Activated naive CD4-positive, alpha-beta T cell treated with anti-CD3 and anti-CD28 coated beads for 36 hours (primary cell): ENCODE measurements at regions of chr6 and their contacts with region 1.

Region 1: GRCh38 chr6:108348655-108349349 is 53.9 kb downstream of the AFG1L start:
- DNase-seq: no peak
- H3K4me3 Mint-ChIP-seq: no peak overlapping the region
- H3K27ac Mint-ChIP-seq: peak overlapping the region; percentile 87
- H3K4me1 Mint-ChIP-seq: peaks cover 10% of the 10 kb centered on the region
- H3K27me3 Mint-ChIP-seq: no peaks in the 10 kb centered on the region

Region 2: DNA sequence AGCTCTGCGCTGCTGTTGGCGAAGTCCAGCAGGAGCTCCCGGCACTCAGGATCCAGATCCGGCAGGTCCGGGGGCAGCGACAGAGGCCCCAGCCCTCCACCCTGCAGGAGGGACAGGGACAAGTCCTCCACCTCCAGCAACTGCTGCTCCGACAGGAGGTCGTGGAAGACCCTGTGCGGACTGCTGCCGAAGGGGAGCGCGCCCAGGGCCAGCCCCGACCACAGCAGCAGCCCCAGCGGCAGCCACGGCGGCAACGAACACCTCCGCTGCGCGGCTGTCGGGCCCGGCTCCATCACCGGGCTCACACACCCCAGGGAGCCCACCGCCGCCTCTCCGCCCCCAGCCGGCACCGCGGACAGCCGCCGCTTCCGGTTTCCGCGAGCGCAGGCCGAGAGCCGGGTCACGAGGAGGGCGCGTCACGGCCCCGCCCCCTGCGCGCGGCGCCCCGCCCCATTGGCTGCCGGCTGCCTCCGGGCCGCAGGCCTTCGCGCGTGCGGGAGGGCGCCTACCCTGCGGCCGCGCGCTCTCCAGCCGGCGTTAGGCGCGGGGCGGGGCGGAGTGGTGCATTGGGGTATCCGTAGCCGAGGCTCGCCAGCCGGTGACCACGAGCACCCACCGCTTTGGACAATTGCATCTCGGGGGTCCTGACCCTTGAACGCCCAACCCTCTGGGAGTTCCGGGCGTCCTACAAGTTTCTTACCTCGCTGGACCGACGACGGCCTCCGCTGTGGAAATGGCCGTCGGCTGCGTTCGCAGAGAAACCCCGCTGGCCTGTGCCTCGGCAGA is 274.2 kb before region 1 on chr6 and contains the start of gene OSTM1:
- CTCF ChIA-PET with region 1: no interaction called
- intact Hi-C with region 1: loop called (anchors 1 kb)
- DNase-seq: peak; percentile 93
- H3K4me3 Mint-ChIP-seq: peak within 1 kb of the TSS; percentile 80
- H3K27ac Mint-ChIP-seq: peak within 1 kb of the TSS; percentile 78
- H3K4me1 Mint-ChIP-seq: peaks cover 30% of the 10 kb centered on the region
- H3K27me3 Mint-ChIP-seq: no peaks in the 10 kb centered on the region
- total RNA-seq, gene OSTM1: 7.1 to 7.5 TPM

Region 3: GRCh38 chr6:108227290-108227689 is 121.5 kb before region 1 on chr6:
- CTCF ChIA-PET with region 1: no interaction called
- intact Hi-C with region 1: no loop called
- DNase-seq: no peak
- H3K4me3 Mint-ChIP-seq: no peak overlapping the region
- H3K27ac Mint-ChIP-seq: no peak overlapping the region
- H3K4me1 Mint-ChIP-seq: peaks cover 15% of the 10 kb centered on the region
- H3K27me3 Mint-ChIP-seq: no peaks in the 10 kb centered on the region

Region 4: DNA sequence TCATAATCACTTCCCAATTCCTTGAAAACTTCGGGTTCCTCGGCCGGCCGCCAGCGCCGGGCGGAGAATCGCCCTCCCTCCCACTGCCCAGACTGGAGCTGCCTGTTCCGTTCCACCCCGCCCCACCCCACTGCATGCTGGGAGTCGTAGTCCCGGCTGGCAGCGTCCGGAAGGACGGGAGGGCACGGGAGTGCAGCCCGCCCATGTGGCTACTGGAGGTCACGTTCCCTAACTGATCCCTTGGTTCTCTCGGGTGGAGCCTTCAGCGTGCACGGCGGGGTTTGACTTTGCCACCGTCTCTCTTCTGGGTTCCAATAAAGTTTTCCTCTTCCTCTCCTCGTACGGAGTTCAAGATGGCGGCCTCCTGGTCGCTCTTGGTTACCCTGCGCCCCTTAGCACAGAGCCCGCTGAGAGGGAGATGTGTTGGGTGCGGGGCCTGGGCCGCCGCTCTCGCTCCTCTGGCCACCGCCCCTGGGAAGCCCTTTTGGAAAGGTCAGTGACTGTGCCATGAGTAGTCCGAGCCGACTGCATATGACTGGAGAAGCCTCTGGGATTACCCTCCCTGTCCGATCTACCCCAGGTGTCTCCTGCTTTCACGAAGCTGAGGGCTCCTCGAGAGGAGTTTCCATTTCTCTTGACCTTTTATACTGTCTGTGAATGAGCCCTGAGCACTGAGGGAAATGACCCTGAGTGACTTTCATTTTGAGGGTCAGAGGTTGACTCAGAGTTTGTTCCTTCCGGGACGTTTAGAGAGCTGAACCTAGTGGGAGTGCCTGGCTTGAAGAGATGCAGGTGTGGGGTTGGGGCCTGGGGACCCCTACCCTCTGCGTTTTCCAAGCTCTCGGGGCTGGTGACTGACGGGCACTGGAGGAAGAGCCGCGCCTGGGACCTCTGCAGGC is 53.8 kb before region 1 on chr6 and contains the start of gene AFG1L:
- CTCF ChIA-PET with region 1: interaction called, 3 read pairs
- intact Hi-C with region 1: loop called (anchors 1 kb)
- DNase-seq: peak; percentile 91
- H3K4me3 Mint-ChIP-seq: peak within 1 kb of the TSS; percentile 99
- H3K27ac Mint-ChIP-seq: peak within 1 kb of the TSS; percentile 100
- H3K4me1 Mint-ChIP-seq: peaks cover 19% of the 10 kb centered on the region
- H3K27me3 Mint-ChIP-seq: no peaks in the 10 kb centered on the region
- total RNA-seq, gene AFG1L: 5.4 to 5.9 TPM

Region 5: GRCh38 chr6:108473197-108473596 is 124.4 kb after region 1 on chr6:
- CTCF ChIA-PET with region 1: no interaction called
- intact Hi-C with region 1: no loop called
- DNase-seq: no peak
- H3K4me3 Mint-ChIP-seq: no peak overlapping the region
- H3K27ac Mint-ChIP-seq: no peak overlapping the region
- H3K4me1 Mint-ChIP-seq: peaks cover 3% of the 10 kb centered on the region
- H3K27me3 Mint-ChIP-seq: peaks cover 17% of the 10 kb centered on the region